Esophagus muscularis mucosa (tissue), 4 donors: ENCODE measurements at regions of chr12 and their contacts with region 1.

Region 1: GRCh38 chr12:63838411-63838810 is 6.1 kb upstream of the SRGAP1 start:
- DNase-seq: no peak
- H3K4me3 ChIP-seq: no peak overlapping the region
- H3K27ac ChIP-seq: no peak overlapping the region
- H3K4me1 ChIP-seq: peaks cover 4 to 6% (median 5%) of the 10 kb centered on the region in 4 donors
- H3K27me3 ChIP-seq: no peaks in the 10 kb centered on the region
- CTCF ChIP-seq: no peak
- EP300 ChIP-seq: no peak
- POLR2A ChIP-seq: no peak

Region 2: DNA sequence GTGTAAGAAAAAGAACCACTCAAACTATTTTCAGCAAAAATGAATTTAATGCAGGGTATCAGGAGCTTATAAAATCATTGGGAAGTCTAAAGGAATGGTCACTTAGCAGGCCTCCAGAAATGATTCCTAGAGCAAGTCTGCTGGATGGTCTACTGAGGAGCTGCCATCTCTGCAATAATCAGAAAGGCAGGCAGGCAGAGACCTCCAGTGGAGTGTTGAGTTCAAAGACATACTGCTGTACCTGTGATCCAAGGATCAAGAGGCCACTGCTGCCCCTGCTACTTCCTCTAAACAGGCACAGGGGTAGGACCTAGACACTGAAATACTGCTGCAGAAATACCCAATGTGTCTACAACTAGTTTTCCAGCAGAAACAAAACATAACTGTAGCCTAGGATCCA is 398.1 kb after region 1 on chr12:
- intact Hi-C with region 1: no loop called
- DNase-seq: no peak
- H3K4me3 ChIP-seq: no peak overlapping the region
- H3K27ac ChIP-seq: no peak overlapping the region
- H3K4me1 ChIP-seq: no peaks in the 10 kb centered on the region
- H3K27me3 ChIP-seq: no peaks in the 10 kb centered on the region
- CTCF ChIP-seq: no peak
- EP300 ChIP-seq: no peak
- POLR2A ChIP-seq: no peak

Region 3: DNA sequence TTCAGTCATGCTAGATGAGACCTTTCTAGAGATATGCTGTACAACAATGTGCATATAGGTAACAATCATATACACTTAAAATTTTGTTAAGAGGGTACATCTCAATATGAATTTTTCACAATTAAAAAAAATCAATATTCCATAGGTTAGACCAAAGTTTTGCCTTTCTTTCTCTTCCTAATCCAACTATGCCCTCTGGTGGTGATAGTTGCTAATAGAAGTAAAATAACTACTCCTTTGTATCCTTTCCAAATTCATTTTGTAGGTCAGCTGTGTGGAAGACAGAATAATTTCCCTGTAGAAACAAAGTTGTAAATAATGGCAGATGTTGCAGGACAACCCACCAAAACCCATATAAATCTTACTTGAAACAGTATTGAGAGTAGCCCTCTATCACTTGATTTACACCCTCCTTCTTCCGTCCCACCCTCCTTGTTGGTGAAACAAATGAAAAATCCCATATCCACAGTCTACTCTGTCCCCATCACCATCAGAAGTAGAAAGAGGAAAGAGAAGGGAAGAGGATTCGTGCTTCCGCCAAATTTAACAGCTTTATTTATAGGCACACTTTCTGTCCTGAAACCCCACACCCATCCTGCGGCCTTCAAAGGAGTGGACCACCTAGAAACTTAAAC is 417.9 kb after region 1 on chr12:
- intact Hi-C with region 1: loop called (anchors 2 kb)
- DNase-seq: no peak
- H3K4me3 ChIP-seq: no peak overlapping the region
- H3K27ac ChIP-seq: no peak overlapping the region
- H3K4me1 ChIP-seq: peaks cover 0 to 2% (median 0%) of the 10 kb centered on the region in 4 donors
- H3K27me3 ChIP-seq: no peaks in the 10 kb centered on the region
- CTCF ChIP-seq: peak; percentile 71 to 76 (median 75)
- EP300 ChIP-seq: no peak
- POLR2A ChIP-seq: no peak